ENCODE measurements at regions of chr2 and their contacts with region 1.

Region 1: GRCh38 chr2:47984041-47984440 is 77.7 kb upstream of the FBXO11 start:
- DNase-seq: no peak
- H3K4me3 ChIP-seq: no peak overlapping the region
- H3K27ac ChIP-seq: no peak overlapping the region
- H3K4me1 ChIP-seq: no peaks in the 10 kb centered on the region
- H3K27me3 ChIP-seq: peaks cover 5 to 9% of the 10 kb centered on the region in 2 experiments
- CTCF ChIP-seq: no peak
- POLR2A ChIP-seq: no peak

Region 2: DNA sequence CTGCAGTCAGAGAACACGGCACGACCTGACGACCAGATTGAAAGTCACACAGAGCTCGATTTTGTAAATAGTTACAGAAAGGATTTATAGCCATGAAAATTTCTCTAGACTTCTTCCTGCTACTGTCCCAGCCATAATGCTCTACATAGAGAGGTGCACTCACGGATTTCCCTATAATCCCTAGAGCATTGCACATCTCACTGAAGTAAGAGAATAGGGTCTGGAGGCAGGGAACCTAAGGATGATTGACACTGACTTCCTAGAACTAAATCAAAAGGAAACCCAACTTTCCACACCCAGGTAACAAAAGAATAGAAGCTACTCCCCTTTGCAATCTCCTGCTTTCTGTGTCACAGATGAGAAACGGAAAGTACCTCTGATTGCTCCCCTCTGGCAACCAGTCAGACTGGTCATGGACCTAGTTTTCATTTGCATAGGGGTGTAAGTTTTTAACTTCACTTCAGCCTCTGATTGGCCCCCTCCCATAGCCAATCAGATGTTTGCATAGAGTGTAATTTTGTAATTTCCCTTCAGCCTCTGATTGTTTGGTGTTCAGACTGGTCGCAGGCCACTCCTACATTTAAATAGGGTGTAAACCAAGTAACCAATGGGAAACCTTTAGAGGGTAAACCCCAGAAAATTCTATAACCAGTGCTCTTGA is 19.1 kb before region 1 on chr2:
- CTCF ChIA-PET with region 1: interaction called, 3 read pairs
- POLR2A ChIA-PET with region 1: no interaction called
- dilution Hi-C with region 1: no loop called
- intact Hi-C with region 1: loop called (anchors 2 kb)
- DNase-seq: no peak
- H3K4me3 ChIP-seq: no peak overlapping the region
- H3K27ac ChIP-seq: no peak overlapping the region
- H3K4me1 ChIP-seq: no peaks in the 10 kb centered on the region
- H3K27me3 ChIP-seq: peaks cover 0 to 9% of the 10 kb centered on the region in 2 experiments
- CTCF ChIP-seq: no peak
- POLR2A ChIP-seq: no peak

Measured in endothelial cell of umbilical vein (primary cell).